Activated CD4-positive, alpha-beta T cell treated with anti-CD3 and anti-CD28 coated beads, Interleukin-2, amount 10 ng/mL, durations not matched to agents 24 days and 14 days (primary cell): ENCODE measurements at regions of chr1 and their contacts with region 1.

Region 1: GRCh38 chr1:67853704-67854103 is 20.4 kb upstream of the GNG12 start:
- DNase-seq: peak; percentile 62
- H3K4me3 Mint-ChIP-seq: no peak overlapping the region
- H3K27ac Mint-ChIP-seq: no peak overlapping the region
- H3K4me1 Mint-ChIP-seq: no peaks in the 10 kb centered on the region
- H3K27me3 Mint-ChIP-seq: peaks cover 9% of the 10 kb centered on the region

Region 2: GRCh38 chr1:68346188-68346808 is 492.6 kb after region 1 on chr1:
- intact Hi-C with region 1: loop called (anchors 10 kb)
- DNase-seq: no peak
- H3K4me3 Mint-ChIP-seq: no peak overlapping the region
- H3K27ac Mint-ChIP-seq: no peak overlapping the region
- H3K4me1 Mint-ChIP-seq: no peaks in the 10 kb centered on the region
- H3K27me3 Mint-ChIP-seq: peaks cover 2% of the 10 kb centered on the region

Region 3: GRCh38 chr1:69737527-69738185 is 1884.0 kb after region 1 on chr1:
- intact Hi-C with region 1: loop called (anchors 10 kb)
- DNase-seq: peak; percentile 77
- H3K4me3 Mint-ChIP-seq: no peak overlapping the region
- H3K27ac Mint-ChIP-seq: no peak overlapping the region
- H3K4me1 Mint-ChIP-seq: no peaks in the 10 kb centered on the region
- H3K27me3 Mint-ChIP-seq: no peaks in the 10 kb centered on the region